ENCODE measurements at regions of chr10 and their contacts with region 1.

Region 1: GRCh38 chr10:101441541-101442455 is 87.8 kb downstream of the BTRC start:
- DNase-seq: peak; percentile 84
- H3K4me3 ChIP-seq: no peak overlapping the region
- H3K27ac ChIP-seq: no peak overlapping the region
- H3K4me1 ChIP-seq: peaks cover 8% of the 10 kb centered on the region
- H3K27me3 ChIP-seq: no peaks in the 10 kb centered on the region
- CTCF ChIP-seq: peak; percentile 75

Region 2: DNA sequence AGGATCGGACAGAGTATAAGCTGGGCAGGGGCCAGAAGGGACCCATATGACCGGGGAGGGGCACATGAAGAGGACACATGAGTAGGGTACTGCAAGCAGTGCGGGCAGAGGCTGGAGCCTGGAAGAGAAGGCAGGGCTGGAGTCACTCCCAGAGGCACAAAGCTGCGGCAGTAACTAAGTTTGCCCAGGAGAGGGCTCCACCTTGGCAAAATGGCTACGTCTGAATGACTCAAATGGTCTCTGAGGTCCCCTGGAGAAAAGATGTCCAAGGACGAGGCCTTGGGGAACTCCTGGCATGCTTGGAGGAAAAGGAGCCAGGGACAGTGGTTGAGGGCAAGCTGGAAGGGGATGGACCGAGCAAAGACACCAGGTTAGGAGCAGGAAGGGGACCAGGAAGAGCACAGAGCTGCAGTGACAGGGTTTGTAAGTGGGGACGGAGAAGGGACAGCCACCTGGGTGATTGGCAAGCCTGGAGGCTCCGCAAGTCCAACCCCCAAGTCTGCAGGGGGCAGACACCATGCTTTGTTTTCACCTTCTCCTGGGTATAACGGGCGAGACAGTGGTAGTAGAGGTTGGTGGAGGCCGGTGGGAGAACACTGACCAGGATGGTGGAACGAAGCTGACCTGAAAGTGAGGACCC is 169.4 kb before region 1 on chr10:
- CTCF ChIA-PET with region 1: interaction called, 4 read pairs
- POLR2A ChIA-PET with region 1: no interaction called
- intact Hi-C with region 1: loop called (anchors 2 kb)
- DNase-seq: peak; percentile 80
- H3K4me3 ChIP-seq: no peak overlapping the region
- H3K27ac ChIP-seq: no peak overlapping the region
- H3K4me1 ChIP-seq: peaks cover 6% of the 10 kb centered on the region
- H3K27me3 ChIP-seq: peaks cover 3% of the 10 kb centered on the region
- CTCF ChIP-seq: peak; percentile 85

Region 3: DNA sequence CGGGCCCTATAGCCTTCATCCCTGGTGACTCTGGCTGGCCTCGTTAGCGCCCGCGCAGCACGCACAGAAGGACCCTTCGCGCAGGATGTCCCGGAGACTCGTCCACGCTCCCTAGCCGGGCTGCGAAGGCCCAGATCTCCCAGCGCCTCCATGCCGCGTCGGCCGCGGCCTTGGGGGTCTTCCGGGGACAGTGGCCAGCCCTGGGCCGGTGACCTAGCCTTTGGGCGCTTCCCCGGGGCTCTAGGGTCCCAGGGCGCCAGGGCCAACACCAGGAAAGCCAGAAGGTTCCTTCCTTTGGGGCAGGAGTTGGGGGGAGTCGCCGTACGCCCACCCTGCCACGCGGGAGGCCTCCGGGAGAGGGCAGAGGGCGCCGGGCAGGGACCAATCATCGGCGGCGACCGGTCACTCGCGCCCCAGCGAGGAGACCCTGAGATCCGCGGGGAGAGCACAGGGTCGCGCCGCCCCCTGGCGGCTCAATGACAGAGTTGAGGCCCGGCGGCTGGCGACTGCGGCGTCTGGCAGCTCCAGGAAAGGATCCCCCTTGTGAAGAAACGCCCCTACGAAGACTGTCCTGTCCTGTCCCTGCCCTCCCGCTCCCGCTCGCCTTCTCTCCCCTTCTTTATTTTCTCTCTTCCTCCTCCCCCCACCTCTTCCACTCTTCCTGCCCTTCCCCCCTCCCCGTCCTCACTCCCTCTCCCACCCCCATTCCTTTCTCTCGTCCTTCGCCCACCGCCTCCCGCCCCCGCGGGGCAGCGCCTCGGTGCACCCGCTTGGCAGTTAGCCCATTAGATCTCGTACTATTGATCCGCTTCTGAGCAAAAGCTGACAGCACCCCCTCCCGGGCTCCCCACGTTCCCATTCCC is 150.2 kb before region 1 on chr10:
- CTCF ChIA-PET with region 1: interaction called, 3 read pairs
- POLR2A ChIA-PET with region 1: no interaction called
- intact Hi-C with region 1: loop called (anchors 5 kb)
- DNase-seq: peak; percentile 75
- H3K4me3 ChIP-seq: peak overlapping the region; percentile 45
- H3K27ac ChIP-seq: no peak overlapping the region
- H3K4me1 ChIP-seq: peaks cover 14% of the 10 kb centered on the region
- H3K27me3 ChIP-seq: peaks cover 37% of the 10 kb centered on the region
- CTCF ChIP-seq: peak; percentile 84

Region 4: GRCh38 chr10:101429423-101429822 is 12.4 kb before region 1 on chr10:
- CTCF ChIA-PET with region 1: no interaction called
- POLR2A ChIA-PET with region 1: no interaction called
- intact Hi-C with region 1: no loop called
- DNase-seq: no peak
- H3K4me3 ChIP-seq: no peak overlapping the region
- H3K27ac ChIP-seq: no peak overlapping the region
- H3K4me1 ChIP-seq: no peaks in the 10 kb centered on the region
- H3K27me3 ChIP-seq: no peaks in the 10 kb centered on the region
- CTCF ChIP-seq: no peak

Region 5: GRCh38 chr10:101840741-101841453 is 399.1 kb after region 1 on chr10:
- CTCF ChIA-PET with region 1: no interaction called
- POLR2A ChIA-PET with region 1: no interaction called
- intact Hi-C with region 1: no loop called
- DNase-seq: peak; percentile 90
- H3K4me3 ChIP-seq: peak overlapping the region; percentile 40
- H3K27ac ChIP-seq: no peak overlapping the region
- H3K4me1 ChIP-seq: peaks cover 9% of the 10 kb centered on the region
- H3K27me3 ChIP-seq: no peaks in the 10 kb centered on the region
- CTCF ChIP-seq: peak; percentile 99